ENCODE measurements at regions of chr7 and their contacts with region 1.

Region 1: DNA sequence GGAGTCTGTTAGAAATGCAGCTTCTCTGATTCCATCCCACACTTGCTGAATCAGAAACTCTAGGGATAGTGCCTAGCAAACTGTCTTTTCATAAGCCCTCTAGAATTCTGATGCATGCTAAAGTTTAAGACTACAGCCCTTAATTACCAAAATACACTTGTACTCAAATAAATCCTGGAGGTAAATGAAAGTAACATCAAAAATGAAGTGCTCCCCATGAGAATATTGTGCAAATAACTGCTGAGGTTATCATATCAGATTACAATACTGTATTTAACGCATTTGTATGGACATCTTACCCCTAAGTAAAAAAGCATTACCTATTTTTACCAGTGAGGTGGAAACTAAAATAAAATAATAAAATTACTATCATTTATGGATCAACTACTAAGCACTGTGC is 104.7 kb downstream of the CHCHD3 start:
- DNase-seq: no peak
- ATAC-seq: no peak
- H3K4me3 ChIP-seq: no peak overlapping the region
- H3K27ac ChIP-seq: no peak overlapping the region
- H3K4me1 ChIP-seq: peaks cover 9% of the 10 kb centered on the region; the same call in 1 of the 2 replicates
- H3K27me3 ChIP-seq: no peaks in the 10 kb centered on the region
- CTCF ChIP-seq: no peak
- EP300 ChIP-seq: no peak
- POLR2A ChIP-seq: no peak
- RAD21 ChIP-seq: no peak

Region 2: DNA sequence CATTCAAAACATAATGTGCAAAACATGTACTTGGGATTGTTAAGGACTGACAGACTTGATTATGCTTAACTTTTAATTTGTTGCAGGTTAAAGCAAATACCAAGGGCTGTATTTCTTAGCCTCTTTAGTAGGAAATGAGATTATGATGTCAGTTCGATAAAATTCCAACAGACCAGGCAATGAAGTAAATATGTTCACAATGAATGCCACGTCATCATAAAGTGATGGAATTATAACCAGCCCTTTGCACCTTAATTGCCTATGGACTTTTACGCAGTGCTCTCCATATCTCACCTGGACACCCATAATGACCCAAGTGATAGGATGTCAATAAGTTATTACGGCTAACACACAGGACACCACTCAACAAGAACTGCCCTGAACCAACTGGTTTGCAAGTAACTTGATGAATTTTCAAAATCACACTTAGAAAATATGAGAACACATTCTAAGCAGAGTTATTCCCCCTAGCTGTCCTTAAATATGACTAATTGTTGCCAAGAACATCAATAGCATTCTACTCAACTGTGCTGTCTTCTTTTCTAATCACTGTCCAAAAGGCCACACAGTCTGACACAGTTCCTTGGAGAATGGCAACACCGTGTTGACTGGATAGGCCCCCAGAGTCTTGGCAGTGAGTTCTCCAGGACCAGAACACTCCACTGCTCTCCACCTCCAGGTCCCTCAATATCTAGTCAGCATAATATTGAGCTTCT is 10.3 kb before region 1 on chr7:
- CTCF ChIA-PET with region 1: interaction called, 6 read pairs
- POLR2A ChIA-PET with region 1: interaction called, 14 read pairs
- RAD21 ChIA-PET with region 1: no interaction called
- SMC1A ChIA-PET with region 1: interaction called, 7 read pairs
- in situ Hi-C with region 1: no loop called
- intact Hi-C with region 1: no loop called
- DNase-seq: no peak
- ATAC-seq: no peak
- H3K4me3 ChIP-seq: no peak overlapping the region
- H3K27ac ChIP-seq: no peak overlapping the region
- H3K4me1 ChIP-seq: no peaks in the 10 kb centered on the region
- H3K27me3 ChIP-seq: no peaks in the 10 kb centered on the region
- CTCF ChIP-seq: no peak
- EP300 ChIP-seq: no peak
- POLR2A ChIP-seq: no peak
- RAD21 ChIP-seq: no peak

Region 3: DNA sequence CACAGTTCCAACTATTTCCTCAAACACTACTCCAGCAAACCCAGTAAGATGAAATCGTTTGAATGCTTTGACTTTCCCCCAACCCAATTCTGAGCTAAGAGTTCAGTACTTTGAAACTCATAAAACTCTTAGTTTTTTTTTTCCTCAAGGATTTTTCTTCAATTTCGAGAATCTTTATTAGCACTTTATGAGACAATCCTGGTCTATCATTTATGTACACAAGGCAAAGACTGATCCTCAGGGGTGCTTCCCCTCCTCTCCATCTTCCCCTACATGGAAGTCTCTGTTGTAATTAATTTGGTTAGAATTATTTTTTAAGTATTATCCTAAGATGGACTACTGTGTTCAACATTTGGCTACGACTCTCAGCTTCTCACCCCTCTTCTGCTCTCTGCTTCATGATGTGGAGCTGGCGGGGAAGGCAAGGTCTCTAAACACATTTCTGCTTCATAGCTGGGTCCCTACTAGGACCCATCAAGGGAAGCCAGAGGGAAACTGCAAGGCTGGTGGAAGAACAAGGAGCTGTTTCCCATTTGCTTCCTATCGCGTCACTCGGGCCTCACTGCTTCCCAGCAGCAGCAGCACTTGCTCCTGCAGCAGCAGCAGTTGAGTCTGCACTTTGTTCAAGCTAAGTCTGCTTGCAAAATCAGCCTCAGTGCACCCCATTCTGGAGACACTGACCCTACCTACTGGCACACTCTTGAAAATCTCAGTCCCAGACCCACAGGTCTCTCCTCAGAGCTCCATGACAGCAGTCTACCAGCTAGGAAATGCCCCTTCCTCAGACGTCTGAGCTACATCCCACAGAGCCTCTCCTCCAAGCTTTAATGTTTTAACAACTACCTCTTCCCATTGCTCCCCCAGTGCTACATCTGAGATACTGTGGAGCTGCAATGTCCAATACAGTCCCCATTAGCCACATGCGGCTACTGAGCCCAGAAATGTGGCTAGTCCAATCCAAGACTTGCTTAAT is 14.7 kb after region 1 on chr7:
- CTCF ChIA-PET with region 1: interaction called, 3 read pairs
- POLR2A ChIA-PET with region 1: interaction called, 4 read pairs
- RAD21 ChIA-PET with region 1: interaction called, 6 read pairs
- SMC1A ChIA-PET with region 1: interaction called, 27 read pairs
- in situ Hi-C with region 1: no loop called
- intact Hi-C with region 1: no loop called
- DNase-seq: no peak
- ATAC-seq: no peak
- H3K4me3 ChIP-seq: no peak overlapping the region
- H3K27ac ChIP-seq: no peak overlapping the region
- H3K4me1 ChIP-seq: no peaks in the 10 kb centered on the region
- H3K27me3 ChIP-seq: no peaks in the 10 kb centered on the region
- CTCF ChIP-seq: no peak
- EP300 ChIP-seq: no peak
- POLR2A ChIP-seq: no peak
- RAD21 ChIP-seq: no peak